Activated CD4-positive, alpha-beta T cell treated with anti-CD3 and anti-CD28 coated beads for 36 hours (primary cell): ENCODE measurements at regions of chr14 and their contacts with region 1.

Region 1: GRCh38 chr14:74762917-74763802 is at the start of gene YLPM1:
- DNase-seq: peak; percentile 95
- ATAC-seq: peak; percentile 92
- H3K4me3 Mint-ChIP-seq: peak within 1 kb of the TSS; percentile 96
- H3K27ac Mint-ChIP-seq: peak within 1 kb of the TSS; percentile 97
- H3K4me1 Mint-ChIP-seq: peaks cover 42% of the 10 kb centered on the region
- H3K27me3 Mint-ChIP-seq: no peaks in the 10 kb centered on the region
- total RNA-seq, gene YLPM1: 53.0 to 60.9 TPM

Region 2: GRCh38 chr14:74712499-74713394 is 50.4 kb before region 1 on chr14 and contains the starts of genes AREL1 and FCF1:
- CTCF ChIA-PET with region 1: interaction called, 3 read pairs
- POLR2A ChIA-PET with region 1: no interaction called
- intact Hi-C with region 1: loop called (anchors 1 kb)
- DNase-seq: peak; percentile 88
- ATAC-seq: peak; percentile 98
- H3K4me3 Mint-ChIP-seq: peak within 1 kb of the TSS; percentile 98
- H3K27ac Mint-ChIP-seq: peak within 1 kb of the TSS; percentile 98
- H3K4me1 Mint-ChIP-seq: peaks cover 50% of the 10 kb centered on the region
- H3K27me3 Mint-ChIP-seq: no peaks in the 10 kb centered on the region
- total RNA-seq, gene AREL1: 31.3 to 35.6 TPM
- total RNA-seq, gene FCF1: 87.7 to 112 TPM

Region 3: DNA sequence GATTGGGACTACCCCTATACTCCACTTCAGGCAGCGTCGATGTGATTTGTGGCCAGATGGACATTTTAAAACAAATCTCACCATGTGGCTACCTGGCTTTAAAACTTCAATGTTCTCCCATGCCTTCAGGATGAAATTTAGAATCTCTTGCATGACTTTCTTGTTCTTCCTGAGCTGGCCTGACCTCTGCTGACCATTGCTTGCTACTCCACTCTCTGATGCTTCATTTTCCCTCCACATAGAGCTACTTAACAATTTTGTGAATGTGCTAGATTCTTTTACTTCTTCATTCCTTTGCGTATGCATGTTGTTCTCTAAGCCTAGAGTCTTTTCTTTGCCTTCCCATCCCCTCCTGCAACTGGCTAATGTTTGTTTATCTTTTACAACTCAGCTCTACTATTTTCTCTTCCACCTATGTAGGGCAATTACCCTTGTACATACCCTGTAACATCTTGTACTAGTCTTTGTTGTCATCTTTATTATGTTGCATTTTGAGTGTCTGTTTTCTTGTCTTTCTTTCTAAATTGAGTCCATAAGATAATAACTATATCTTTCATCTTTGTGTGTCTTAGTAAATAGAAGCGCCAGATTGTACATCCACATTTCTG is 41.2 kb after region 1 on chr14:
- CTCF ChIA-PET with region 1: interaction called, 3 read pairs
- POLR2A ChIA-PET with region 1: no interaction called
- intact Hi-C with region 1: loop called in 1 of 2 experiments (anchors 5 kb)
- DNase-seq: peak; percentile 43
- ATAC-seq: peak; percentile 44
- H3K4me3 Mint-ChIP-seq: no peak overlapping the region
- H3K27ac Mint-ChIP-seq: no peak overlapping the region
- H3K4me1 Mint-ChIP-seq: no peaks in the 10 kb centered on the region
- H3K27me3 Mint-ChIP-seq: no peaks in the 10 kb centered on the region

Region 4: GRCh38 chr14:74893614-74894091 is 130.5 kb after region 1 on chr14:
- CTCF ChIA-PET with region 1: no interaction called
- POLR2A ChIA-PET with region 1: no interaction called
- intact Hi-C with region 1: no loop called
- DNase-seq: no peak
- ATAC-seq: no peak
- H3K4me3 Mint-ChIP-seq: no peak overlapping the region
- H3K27ac Mint-ChIP-seq: peak overlapping the region; percentile 12
- H3K4me1 Mint-ChIP-seq: no peaks in the 10 kb centered on the region
- H3K27me3 Mint-ChIP-seq: no peaks in the 10 kb centered on the region

Region 5: GRCh38 chr14:75050852-75051554 is 287.8 kb after region 1 on chr14 and contains the start of gene MLH3:
- CTCF ChIA-PET with region 1: no interaction called
- POLR2A ChIA-PET with region 1: no interaction called
- intact Hi-C with region 1: loop called in 1 of 2 experiments (anchors 1 kb)
- DNase-seq: peak; percentile 87
- ATAC-seq: peak; percentile 66
- H3K4me3 Mint-ChIP-seq: peak within 1 kb of the TSS; percentile 88
- H3K27ac Mint-ChIP-seq: peak within 1 kb of the TSS; percentile 94
- H3K4me1 Mint-ChIP-seq: peaks cover 72% of the 10 kb centered on the region
- H3K27me3 Mint-ChIP-seq: no peaks in the 10 kb centered on the region
- total RNA-seq, gene MLH3: 28.1 to 30.8 TPM